ENCODE measurements at regions of chr1 and their contacts with region 1.

Region 1: DNA sequence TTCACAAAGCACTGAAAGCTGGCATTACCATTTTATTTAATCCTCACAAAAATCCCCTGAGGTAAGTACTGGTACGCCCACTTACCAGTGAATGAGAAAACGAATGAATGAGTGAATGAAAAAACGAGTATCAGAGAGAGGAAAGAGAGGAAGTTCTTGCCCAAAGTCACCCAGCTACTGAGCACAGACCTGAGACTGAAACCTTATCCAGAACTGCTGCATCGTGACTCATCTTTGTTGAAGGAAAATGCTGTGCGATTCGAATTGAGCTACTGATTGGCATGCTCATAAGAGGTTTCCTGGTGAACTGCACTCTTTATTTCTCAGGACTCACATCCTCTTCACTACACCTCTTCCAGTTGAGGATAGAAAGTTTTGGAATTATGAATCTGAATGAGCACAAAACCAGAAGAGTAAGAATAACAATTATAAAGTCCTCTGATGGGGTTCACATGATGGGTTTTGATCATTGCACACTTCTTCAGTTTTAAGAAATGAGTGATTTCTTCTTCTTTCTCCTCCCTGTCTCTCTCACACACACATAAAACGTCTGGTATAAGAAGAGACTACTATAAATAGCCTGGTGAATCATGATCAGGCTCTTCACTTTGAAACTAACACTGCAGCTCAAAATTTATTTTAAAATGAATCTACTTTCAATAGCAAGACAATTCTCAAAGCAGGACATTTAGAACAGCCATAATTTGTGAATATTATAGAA is 32.1 kb downstream of the IL12RB2 start:
- DNase-seq: peak; percentile 75
- H3K4me3 Mint-ChIP-seq: peak overlapping the region; percentile 1
- H3K27ac Mint-ChIP-seq: peak overlapping the region; percentile 97
- H3K4me1 Mint-ChIP-seq: peaks cover 83% of the 10 kb centered on the region
- H3K27me3 Mint-ChIP-seq: no peaks in the 10 kb centered on the region

Region 2: GRCh38 chr1:67053785-67054772 is 285.7 kb before region 1 on chr1 and contains the start of gene SLC35D1:
- CTCF ChIA-PET with region 1: no interaction called
- intact Hi-C with region 1: loop called (anchors 5 kb)
- DNase-seq: peak; percentile 81
- H3K4me3 Mint-ChIP-seq: peak within 1 kb of the TSS; percentile 82
- H3K27ac Mint-ChIP-seq: peak within 1 kb of the TSS; percentile 93
- H3K4me1 Mint-ChIP-seq: peaks cover 19% of the 10 kb centered on the region
- H3K27me3 Mint-ChIP-seq: no peaks in the 10 kb centered on the region
- total RNA-seq, gene SLC35D1: 10.5 to 11.1 TPM

Region 3: GRCh38 chr1:67174716-67175284 is 165.0 kb before region 1 on chr1:
- CTCF ChIA-PET with region 1: no interaction called
- intact Hi-C with region 1: loop called (anchors 1 kb)
- DNase-seq: peak; percentile 63
- H3K4me3 Mint-ChIP-seq: peak overlapping the region; percentile 7
- H3K27ac Mint-ChIP-seq: peak overlapping the region; percentile 99
- H3K4me1 Mint-ChIP-seq: peaks cover 81% of the 10 kb centered on the region
- H3K27me3 Mint-ChIP-seq: no peaks in the 10 kb centered on the region

Region 4: DNA sequence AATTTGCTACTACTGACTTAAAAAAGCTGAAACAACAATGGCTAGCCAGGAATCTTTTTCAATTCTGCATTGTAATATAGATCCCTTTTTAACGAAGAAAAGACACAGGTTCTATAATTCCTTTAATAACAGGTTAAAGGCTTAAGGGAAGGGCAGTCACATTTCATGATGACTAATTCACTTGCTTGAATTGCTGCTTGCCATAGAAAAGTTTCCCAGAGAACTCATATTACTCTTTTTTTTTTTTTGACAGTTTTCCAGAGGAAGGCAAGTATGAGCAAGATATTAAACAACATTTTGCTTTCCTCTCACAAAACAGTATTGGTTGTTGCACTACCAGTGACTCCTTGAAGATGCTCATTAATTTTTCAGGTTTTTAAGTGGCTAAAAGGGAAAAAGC is 112.6 kb before region 1 on chr1:
- CTCF ChIA-PET with region 1: interaction called, 5 read pairs
- intact Hi-C with region 1: loop called (anchors 2 kb)
- DNase-seq: no peak
- H3K4me3 Mint-ChIP-seq: no peak overlapping the region
- H3K27ac Mint-ChIP-seq: no peak overlapping the region
- H3K4me1 Mint-ChIP-seq: peaks cover 28% of the 10 kb centered on the region
- H3K27me3 Mint-ChIP-seq: no peaks in the 10 kb centered on the region

Region 5: DNA sequence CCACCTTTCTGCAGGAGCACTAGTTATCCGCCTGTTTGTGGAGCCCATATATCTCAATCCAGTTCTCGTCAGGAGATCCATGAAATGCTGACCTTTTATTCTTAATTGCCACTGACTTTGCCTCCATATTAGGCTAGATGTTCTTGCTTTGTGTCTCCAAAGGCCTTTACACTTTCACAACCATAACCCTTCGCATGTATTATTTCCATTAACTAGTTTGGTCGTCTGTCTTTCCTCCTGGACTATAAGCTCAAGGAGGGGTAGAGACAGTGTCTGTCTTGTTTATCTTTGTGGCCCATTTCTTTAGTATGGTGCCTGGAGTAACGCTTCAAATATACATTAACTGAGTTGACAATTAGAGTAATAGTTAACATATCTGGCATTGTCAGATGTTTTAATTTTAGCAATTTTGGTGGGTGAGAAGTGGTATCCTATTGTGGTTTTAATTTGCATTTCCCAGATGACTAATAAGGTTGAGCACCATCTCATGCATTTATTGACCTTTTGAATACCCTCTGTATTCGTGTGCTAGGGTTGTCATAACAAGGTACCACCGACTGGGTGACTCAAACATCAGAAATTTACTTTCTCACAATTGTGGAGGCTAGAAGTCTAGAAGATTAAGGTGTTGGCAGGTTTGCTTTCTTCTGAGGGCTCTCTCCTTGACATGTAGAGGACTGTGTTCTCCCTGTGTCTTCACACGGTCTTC is 53.8 kb before region 1 on chr1:
- CTCF ChIA-PET with region 1: interaction called, 3 read pairs
- intact Hi-C with region 1: loop called (anchors 1 kb)
- DNase-seq: peak; percentile 55
- H3K4me3 Mint-ChIP-seq: no peak overlapping the region
- H3K27ac Mint-ChIP-seq: peak overlapping the region; percentile 65
- H3K4me1 Mint-ChIP-seq: peaks cover 52% of the 10 kb centered on the region
- H3K27me3 Mint-ChIP-seq: no peaks in the 10 kb centered on the region

Region 6: GRCh38 chr1:67314696-67315095 is 25.1 kb before region 1 on chr1:
- CTCF ChIA-PET with region 1: interaction called, 3 read pairs
- intact Hi-C with region 1: loop called (anchors 1 kb)
- DNase-seq: peak; percentile 56
- H3K4me3 Mint-ChIP-seq: peak overlapping the region; percentile 47
- H3K27ac Mint-ChIP-seq: peak overlapping the region; percentile 95
- H3K4me1 Mint-ChIP-seq: peaks cover 46% of the 10 kb centered on the region
- H3K27me3 Mint-ChIP-seq: no peaks in the 10 kb centered on the region

Region 7: GRCh38 chr1:67430352-67431155 is 90.8 kb after region 1 on chr1 and contains the start of gene SERBP1:
- CTCF ChIA-PET with region 1: interaction called, 3 read pairs
- intact Hi-C with region 1: loop called (anchors 1 kb)
- DNase-seq: peak; percentile 97
- H3K4me3 Mint-ChIP-seq: peak within 1 kb of the TSS; percentile 97
- H3K27ac Mint-ChIP-seq: peak within 1 kb of the TSS; percentile 98
- H3K4me1 Mint-ChIP-seq: peaks cover 44% of the 10 kb centered on the region
- H3K27me3 Mint-ChIP-seq: no peaks in the 10 kb centered on the region
- total RNA-seq, gene SERBP1: 527 to 537 TPM

Measured in activated naive CD4-positive, alpha-beta T cell treated with anti-CD3 and anti-CD28 coated beads for 36 hours (primary cell).